ENCODE measurements at regions of chr5 and their contacts with region 1.

Region 1: GRCh38 chr5:80408483-80409366 is 861 bp downstream of the ZFYVE16 start:
- DNase-seq: no peak
- ATAC-seq: peak; percentile 72
- H3K4me3 ChIP-seq: peak overlapping the region; percentile 93
- H3K27ac ChIP-seq: peak overlapping the region; percentile 62
- H3K4me1 ChIP-seq: no peaks in the 10 kb centered on the region
- H3K27me3 ChIP-seq: no peaks in the 10 kb centered on the region
- CTCF ChIP-seq: peak in 1 of 3 experiments; percentile 29; a peak in 1 of 6 replicates
- EP300 ChIP-seq: no peak
- POLR2A ChIP-seq: no peak
- RAD21 ChIP-seq: no peak

Region 2: DNA sequence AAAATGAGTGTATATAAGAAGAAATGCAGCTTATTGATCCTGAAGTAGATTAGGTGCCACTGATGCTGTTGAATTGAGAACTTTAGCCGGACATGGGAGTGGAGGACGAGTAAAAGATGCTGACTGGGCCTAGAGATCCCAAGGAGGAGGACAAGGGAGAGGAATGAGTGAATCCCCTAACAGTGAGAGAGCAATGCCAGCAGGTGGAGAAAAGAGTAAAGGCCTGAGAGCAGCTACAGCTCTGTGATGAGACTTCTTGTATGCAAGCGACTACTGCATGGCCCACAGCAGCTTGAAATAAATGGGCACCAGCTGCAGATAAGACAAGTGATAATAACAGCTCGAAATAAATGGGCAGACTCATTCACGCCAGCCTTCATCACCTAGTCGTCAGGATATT is 1217.3 kb before region 1 on chr5:
- CTCF ChIA-PET with region 1: no interaction called
- POLR2A ChIA-PET with region 1: interaction called, 12 read pairs
- RAD21 ChIA-PET with region 1: no interaction called
- SMC1A ChIA-PET with region 1: no interaction called
- in situ Hi-C with region 1: no loop called
- intact Hi-C with region 1: no loop called
- DNase-seq: no peak
- ATAC-seq: 0 out of 3 replicates have a peak, but pooled peaks have one; percentile 30
- H3K4me3 ChIP-seq: no peak overlapping the region
- H3K27ac ChIP-seq: no peak overlapping the region
- H3K4me1 ChIP-seq: no peaks in the 10 kb centered on the region
- H3K27me3 ChIP-seq: no peaks in the 10 kb centered on the region
- CTCF ChIP-seq: peak in 2 of 3 experiments; percentile 22 to 24; a peak in 1 of 6 replicates
- EP300 ChIP-seq: no peak
- POLR2A ChIP-seq: no peak
- RAD21 ChIP-seq: peak; percentile 8; the same call in 1 of the 2 replicates

Region 3: DNA sequence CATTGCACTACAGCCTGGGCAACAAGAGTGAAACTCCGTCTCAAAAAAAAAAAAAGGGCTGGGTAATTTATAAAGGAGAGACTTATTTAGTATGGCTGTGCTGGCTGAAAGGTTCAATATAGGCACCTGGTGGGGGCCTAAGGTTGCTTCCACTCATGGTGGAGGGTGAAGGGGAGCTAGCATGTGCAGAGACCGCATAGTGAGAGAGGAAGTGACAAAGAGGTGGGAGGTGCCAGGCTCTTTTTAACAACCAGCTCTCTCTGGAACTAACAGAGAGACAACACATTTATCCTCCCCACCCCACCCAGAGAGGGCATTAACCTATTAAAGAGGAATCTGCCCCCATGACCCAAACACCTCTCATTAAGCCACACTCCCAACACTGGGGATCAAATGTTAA is 124.0 kb before region 1 on chr5:
- CTCF ChIA-PET with region 1: no interaction called
- POLR2A ChIA-PET with region 1: no interaction called
- RAD21 ChIA-PET with region 1: no interaction called
- SMC1A ChIA-PET with region 1: no interaction called
- in situ Hi-C with region 1: no loop called
- intact Hi-C with region 1: no loop called
- DNase-seq: no peak
- ATAC-seq: peak; percentile 74
- H3K4me3 ChIP-seq: no peak overlapping the region
- H3K27ac ChIP-seq: no peak overlapping the region
- H3K4me1 ChIP-seq: no peaks in the 10 kb centered on the region
- H3K27me3 ChIP-seq: no peaks in the 10 kb centered on the region
- CTCF ChIP-seq: no peak
- EP300 ChIP-seq: no peak
- POLR2A ChIP-seq: no peak
- RAD21 ChIP-seq: no peak

Region 4: GRCh38 chr5:80453366-80453765 is 44.6 kb after region 1 on chr5:
- CTCF ChIA-PET with region 1: no interaction called
- POLR2A ChIA-PET with region 1: no interaction called
- RAD21 ChIA-PET with region 1: no interaction called
- SMC1A ChIA-PET with region 1: no interaction called
- in situ Hi-C with region 1: no loop called
- intact Hi-C with region 1: no loop called
- DNase-seq: no peak
- ATAC-seq: no peak
- H3K4me3 ChIP-seq: no peak overlapping the region
- H3K27ac ChIP-seq: no peak overlapping the region
- H3K4me1 ChIP-seq: no peaks in the 10 kb centered on the region
- H3K27me3 ChIP-seq: no peaks in the 10 kb centered on the region
- CTCF ChIP-seq: no peak
- EP300 ChIP-seq: no peak
- POLR2A ChIP-seq: no peak
- RAD21 ChIP-seq: no peak

Measured in GM12878 (cell line).